Breast epithelium (tissue), 4 donors: ENCODE measurements at regions of chrX and their contacts with region 1.

Region 1: DNA sequence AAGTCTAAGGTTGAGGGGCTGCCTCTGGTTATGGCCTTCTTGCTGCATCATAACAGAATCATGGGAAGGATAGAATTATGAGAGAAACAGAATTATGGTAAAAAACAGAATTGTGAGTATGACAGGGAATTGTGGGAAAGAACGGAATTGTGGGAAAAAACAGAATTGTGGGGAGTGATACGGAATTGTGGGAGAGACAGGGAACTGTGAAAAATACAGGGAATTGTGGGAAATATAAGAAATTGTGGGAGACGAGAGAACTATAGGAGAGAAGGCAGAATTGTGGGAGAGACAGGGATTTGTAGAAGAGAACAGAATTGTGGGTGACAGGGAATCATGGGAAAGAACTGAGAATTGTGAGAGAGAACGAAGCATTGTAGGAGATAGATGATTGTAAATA is 159.1 kb downstream of the FRMPD4 start:
- DNase-seq: no peak
- H3K4me3 ChIP-seq: no peak overlapping the region
- H3K27ac ChIP-seq: no peak overlapping the region
- H3K4me1 ChIP-seq: no peaks in the 10 kb centered on the region
- H3K27me3 ChIP-seq: peaks cover 0 to 17% of the 10 kb centered on the region in 2 donors
- CTCF ChIP-seq: no peak
- POLR2A ChIP-seq: no peak

Region 2: DNA sequence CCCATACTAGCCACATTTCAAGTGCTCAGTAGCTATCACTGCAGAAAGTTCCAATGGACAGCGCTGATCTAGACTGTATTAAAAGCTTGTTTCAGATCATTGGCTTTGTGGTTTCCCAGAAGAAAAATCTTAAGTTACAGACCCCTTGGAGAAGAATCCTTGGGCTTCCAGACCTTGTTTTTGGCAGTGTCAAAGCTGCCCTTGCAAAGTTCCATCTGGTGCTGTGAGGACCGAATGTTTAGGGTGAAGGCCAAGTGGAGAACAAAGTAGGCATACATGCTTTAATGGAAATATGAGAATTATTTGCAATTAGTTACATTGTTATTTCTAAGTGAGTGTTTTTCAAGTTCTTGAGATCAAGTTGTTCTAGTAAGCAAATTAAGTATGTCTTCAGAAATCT is 14.4 kb before region 1 on chrX:
- intact Hi-C with region 1: loop called (anchors 2 kb)
- DNase-seq: no peak
- H3K4me3 ChIP-seq: no peak overlapping the region
- H3K27ac ChIP-seq: no peak overlapping the region
- H3K4me1 ChIP-seq: no peaks in the 10 kb centered on the region
- H3K27me3 ChIP-seq: peaks cover 0 to 22% of the 10 kb centered on the region in 2 donors
- CTCF ChIP-seq: no peak
- POLR2A ChIP-seq: no peak